T-cell (primary cell): ENCODE measurements at regions of chr3 and their contacts with region 1.

Region 1: GRCh38 chr3:47781685-47782445 is at the start of gene SMARCC1:
- DNase-seq: peak; percentile 93 to 99 (median 96)
- ATAC-seq: peak; percentile 89 to 93 (median 92)
- H3K4me3 ChIP-seq: peak within 1 kb of the TSS; percentile 80 to 90
- H3K4me3 Mint-ChIP-seq: peak within 1 kb of the TSS; percentile 91 to 96 (median 92)
- H3K27ac ChIP-seq: peak within 1 kb of the TSS; percentile 92
- H3K27ac Mint-ChIP-seq: peak within 1 kb of the TSS; percentile 97 to 98
- H3K4me1 ChIP-seq: peaks cover 24 to 41% of the 10 kb centered on the region in 2 experiments
- H3K4me1 Mint-ChIP-seq: peaks cover 27 to 29% (median 28%) of the 10 kb centered on the region in 3 donors
- H3K27me3 ChIP-seq: no peaks in the 10 kb centered on the region
- H3K27me3 Mint-ChIP-seq: no peaks in the 10 kb centered on the region
- total RNA-seq, gene SMARCC1: 88.9 to 99.3 (median 92.4) TPM

Region 2: DNA sequence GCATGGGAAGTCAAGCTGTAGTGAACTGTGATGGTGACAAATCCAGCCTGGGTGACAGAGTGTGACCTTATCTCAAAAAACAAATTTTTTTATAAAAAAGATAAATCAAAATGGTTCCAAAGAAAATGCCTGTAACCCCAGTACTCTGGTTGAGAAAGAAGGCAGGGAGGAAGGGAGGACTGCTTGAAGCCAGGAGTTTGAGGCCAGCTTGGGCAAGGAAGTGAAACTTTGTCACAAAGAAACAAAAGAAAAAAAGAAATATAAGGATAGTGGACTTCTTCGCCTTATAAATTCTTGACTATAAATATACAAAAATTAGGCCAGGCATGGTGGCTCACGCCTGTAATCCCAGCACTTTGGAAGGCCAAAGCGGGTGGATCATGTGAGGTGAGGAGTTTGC is 34.3 kb before region 1 on chr3:
- CTCF ChIA-PET with region 1: no interaction called
- POLR2A ChIA-PET with region 1: interaction called in 1 of 2 experiments, 12 read pairs
- DNase-seq: no peak
- ATAC-seq: no peak
- H3K4me3 ChIP-seq: no peak overlapping the region
- H3K4me3 Mint-ChIP-seq: no peak overlapping the region
- H3K27ac ChIP-seq: no peak overlapping the region
- H3K27ac Mint-ChIP-seq: no peak overlapping the region
- H3K4me1 ChIP-seq: peaks cover 0 to 3% of the 10 kb centered on the region in 2 experiments
- H3K4me1 Mint-ChIP-seq: peaks cover 7 to 13% (median 10%) of the 10 kb centered on the region in 3 donors
- H3K27me3 ChIP-seq: no peaks in the 10 kb centered on the region
- H3K27me3 Mint-ChIP-seq: no peaks in the 10 kb centered on the region

Region 3: GRCh38 chr3:47932421-47932820 is 150.6 kb after region 1 on chr3:
- CTCF ChIA-PET with region 1: no interaction called
- POLR2A ChIA-PET with region 1: no interaction called
- DNase-seq: no peak
- ATAC-seq: no peak
- H3K4me3 ChIP-seq: no peak overlapping the region
- H3K4me3 Mint-ChIP-seq: no peak overlapping the region
- H3K27ac ChIP-seq: no peak overlapping the region
- H3K27ac Mint-ChIP-seq: no peak overlapping the region
- H3K4me1 ChIP-seq: no peaks in the 10 kb centered on the region
- H3K4me1 Mint-ChIP-seq: peaks cover 0 to 2% (median 0%) of the 10 kb centered on the region in 3 donors
- H3K27me3 ChIP-seq: no peaks in the 10 kb centered on the region
- H3K27me3 Mint-ChIP-seq: no peaks in the 10 kb centered on the region